Mammary epithelial cell (primary cell): ENCODE measurements at regions of chr20 and their contacts with region 1.

Region 1: DNA sequence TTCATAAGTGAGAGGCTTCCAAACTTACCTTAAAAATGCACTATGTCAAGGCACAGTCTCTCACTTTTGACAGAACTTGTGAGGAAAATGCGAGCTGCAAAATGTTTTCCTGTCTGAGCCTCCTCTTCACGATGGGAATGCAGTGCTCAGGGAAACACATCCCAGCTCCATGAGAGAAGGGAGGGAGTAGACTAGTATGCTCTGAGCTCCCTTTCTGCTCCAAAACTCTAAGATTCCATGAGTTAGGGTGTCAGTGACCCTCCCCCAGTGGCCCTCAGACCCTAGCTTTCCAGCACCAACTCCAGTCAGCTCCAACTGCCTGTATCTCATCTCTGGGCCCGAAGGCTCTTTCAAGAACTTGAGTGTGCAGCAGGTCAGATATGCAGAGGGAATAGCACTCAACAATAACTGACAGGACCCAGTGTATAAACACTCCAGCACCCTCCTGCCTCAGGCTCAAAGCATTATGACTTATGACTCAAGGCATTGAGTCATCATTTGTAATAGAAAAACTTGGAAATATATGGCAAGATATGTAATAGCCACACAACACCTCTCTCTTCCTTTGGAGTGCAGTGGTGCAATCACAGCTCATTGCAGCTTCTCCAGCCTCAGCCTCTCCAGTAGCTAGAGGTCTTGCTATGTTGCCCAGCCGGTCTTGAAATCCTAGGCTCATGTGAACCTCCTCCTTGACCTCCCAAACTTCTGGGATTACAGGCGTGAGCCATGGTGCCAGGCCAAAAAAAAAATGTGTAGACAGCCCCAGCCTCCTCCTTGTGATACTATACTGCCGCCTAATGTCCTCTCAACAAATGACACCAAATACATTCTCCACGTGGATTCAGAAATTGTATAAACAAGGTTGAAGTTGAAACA is 16.7 kb upstream of the ENTPD6 start:
- DNase-seq: peak; percentile 97
- H3K4me3 ChIP-seq: no peak overlapping the region
- H3K27ac ChIP-seq: peak overlapping the region; percentile 12
- H3K4me1 ChIP-seq: peaks cover 26% of the 10 kb centered on the region
- H3K27me3 ChIP-seq: no peaks in the 10 kb centered on the region
- CTCF ChIP-seq: peak; percentile 93 to 97

Region 2: GRCh38 chr20:25000268-25000821 is 178.5 kb before region 1 on chr20:
- CTCF ChIA-PET with region 1: no interaction called
- dilution Hi-C with region 1: no loop called
- in situ Hi-C with region 1: loop called (anchors 10 kb)
- intact Hi-C with region 1: loop called (anchors 1 kb)
- DNase-seq: peak; percentile 89
- H3K4me3 ChIP-seq: no peak overlapping the region
- H3K27ac ChIP-seq: no peak overlapping the region
- H3K4me1 ChIP-seq: peaks cover 13% of the 10 kb centered on the region
- H3K27me3 ChIP-seq: no peaks in the 10 kb centered on the region
- CTCF ChIP-seq: peak; percentile 6 to 28

Region 3: DNA sequence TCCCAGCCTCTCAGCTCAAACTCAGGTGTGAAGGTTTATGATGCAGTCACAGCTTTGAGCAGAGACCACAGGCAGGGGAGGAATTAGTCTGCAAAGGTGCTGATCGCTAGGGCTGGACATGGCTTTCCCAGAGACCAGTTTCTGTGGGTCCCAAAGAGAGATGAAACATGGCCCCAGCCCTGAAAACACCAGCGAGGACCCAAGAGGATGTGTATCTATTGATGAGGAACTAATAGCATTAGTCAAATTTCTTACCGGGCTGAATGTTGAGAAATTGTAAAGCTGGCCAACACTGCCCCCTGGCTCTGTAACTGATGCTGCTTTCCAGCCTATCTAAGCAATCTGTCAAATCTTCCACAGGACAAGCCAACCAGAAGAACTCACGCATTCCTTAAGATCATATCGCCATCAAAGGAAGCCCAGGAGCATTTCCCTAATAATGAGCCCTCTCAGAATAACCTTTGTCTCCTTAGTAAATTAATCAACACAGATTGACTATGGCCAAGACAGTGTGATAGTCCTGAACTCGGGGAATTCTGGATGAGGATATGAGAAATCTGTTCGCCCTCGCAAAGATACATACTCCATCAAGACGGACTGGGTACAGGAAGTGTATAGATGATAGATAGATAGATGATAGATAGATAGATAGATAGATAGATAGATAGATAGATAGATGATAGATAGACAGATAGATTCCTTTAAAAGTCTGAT is 113.0 kb before region 1 on chr20:
- CTCF ChIA-PET with region 1: no interaction called
- dilution Hi-C with region 1: no loop called
- in situ Hi-C with region 1: loop called in 1 of 2 experiments (anchors 10 kb)
- intact Hi-C with region 1: loop called (anchors 1 kb)
- DNase-seq: peak; percentile 44
- H3K4me3 ChIP-seq: no peak overlapping the region
- H3K27ac ChIP-seq: no peak overlapping the region
- H3K4me1 ChIP-seq: no peaks in the 10 kb centered on the region
- H3K27me3 ChIP-seq: peaks cover 16% of the 10 kb centered on the region
- CTCF ChIP-seq: peak; percentile 82 to 84

Region 4: GRCh38 chr20:25083773-25084625 is 94.8 kb before region 1 on chr20:
- CTCF ChIA-PET with region 1: interaction called, 3 read pairs
- dilution Hi-C with region 1: no loop called
- in situ Hi-C with region 1: loop called (anchors 10 kb)
- intact Hi-C with region 1: loop called (anchors 2 kb)
- DNase-seq: no peak
- H3K4me3 ChIP-seq: no peak overlapping the region
- H3K27ac ChIP-seq: no peak overlapping the region
- H3K4me1 ChIP-seq: no peaks in the 10 kb centered on the region
- H3K27me3 ChIP-seq: peaks cover 42% of the 10 kb centered on the region
- CTCF ChIP-seq: no peak

Region 5: GRCh38 chr20:25158043-25158442 is 20.8 kb before region 1 on chr20:
- CTCF ChIA-PET with region 1: interaction called, 4 read pairs
- dilution Hi-C with region 1: no loop called
- in situ Hi-C with region 1: no loop called
- intact Hi-C with region 1: loop called (anchors 2 kb)
- DNase-seq: no peak
- H3K4me3 ChIP-seq: no peak overlapping the region
- H3K27ac ChIP-seq: no peak overlapping the region
- H3K4me1 ChIP-seq: no peaks in the 10 kb centered on the region
- H3K27me3 ChIP-seq: peaks cover 3% of the 10 kb centered on the region
- CTCF ChIP-seq: no peak

Region 6: DNA sequence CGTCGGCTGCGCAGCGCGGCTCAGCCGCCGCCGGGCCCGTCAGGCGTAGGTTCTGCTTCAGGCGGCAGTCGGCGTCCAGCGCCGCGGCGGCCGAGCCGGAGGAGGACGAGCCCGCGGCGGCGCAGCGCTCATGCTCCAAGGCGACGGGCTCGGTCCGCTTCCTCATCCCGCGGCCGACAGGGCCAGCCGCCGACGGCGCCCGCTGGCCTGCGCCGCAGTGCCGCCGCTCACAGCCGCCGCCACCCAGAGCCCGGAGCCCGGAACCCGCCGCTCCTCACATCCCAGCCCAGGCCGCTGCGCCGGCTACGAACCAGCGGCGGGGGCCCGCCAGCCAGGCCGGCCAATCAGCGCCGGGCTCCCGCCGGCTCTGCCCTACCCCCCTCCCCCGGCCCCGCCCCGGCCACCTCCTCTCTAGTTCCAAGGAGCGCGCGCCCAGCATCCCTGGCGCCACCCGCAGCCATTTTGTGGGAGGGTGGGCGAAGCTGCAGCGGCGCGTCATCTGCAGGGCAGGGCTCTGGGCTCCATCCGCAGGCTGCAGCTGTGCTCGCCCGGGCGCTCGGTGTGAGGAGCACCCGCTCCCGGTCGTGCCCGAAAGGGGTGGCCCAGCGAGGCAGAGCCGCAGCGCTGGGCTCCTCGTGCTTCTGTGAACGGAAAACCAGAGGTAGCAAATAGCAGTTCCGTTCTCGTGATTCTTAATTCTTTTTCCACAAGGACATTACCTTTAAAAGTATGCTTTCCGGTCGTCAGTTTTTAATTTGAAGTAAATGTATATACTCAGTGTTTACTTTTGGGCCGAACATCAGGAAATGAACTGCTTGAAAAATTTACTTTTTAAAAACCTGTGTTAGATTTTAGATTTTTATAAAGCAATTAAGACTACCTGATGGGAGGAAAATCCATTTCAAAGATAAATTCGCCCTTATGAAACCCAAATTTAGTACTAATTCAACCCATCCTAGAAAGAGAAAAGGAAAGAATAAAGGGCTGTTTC is 212.0 kb after region 1 on chr20 and contains the start of gene ABHD12:
- CTCF ChIA-PET with region 1: no interaction called
- dilution Hi-C with region 1: loop called (anchors 10 kb)
- in situ Hi-C with region 1: loop called in 1 of 2 experiments (anchors 25 kb)
- intact Hi-C with region 1: no loop called
- DNase-seq: peak; percentile 97
- H3K4me3 ChIP-seq: peak within 1 kb of the TSS; percentile 63 to 97 (median 68)
- H3K27ac ChIP-seq: peak within 1 kb of the TSS; percentile 44
- H3K4me1 ChIP-seq: peaks cover 7% of the 10 kb centered on the region
- H3K27me3 ChIP-seq: no peaks in the 10 kb centered on the region
- CTCF ChIP-seq: no peak
- total RNA-seq, gene ABHD12: 21.2 to 21.6 TPM